ENCODE measurements at regions of chr14 and their contacts with region 1.

Region 1: GRCh38 chr14:64823305-64823861 is 56.3 kb downstream of the SPTB start:
- DNase-seq: peak; percentile 84 to 91 (median 90)
- ATAC-seq: peak; percentile 87 to 89
- H3K4me3 ChIP-seq: no peak overlapping the region
- H3K27ac ChIP-seq: no peak overlapping the region
- H3K4me1 ChIP-seq: peaks cover 10% of the 10 kb centered on the region
- H3K27me3 ChIP-seq: no peaks in the 10 kb centered on the region

Region 2: GRCh38 chr14:64879635-64880220 is 56.3 kb after region 1 on chr14 and contains the start of gene SPTB:
- intact Hi-C with region 1: loop called in 1 of 4 experiments (anchors 5 kb)
- DNase-seq: peak; percentile 59 to 87 (median 86)
- ATAC-seq: peak; percentile 92
- H3K4me3 ChIP-seq: peak within 1 kb of the TSS; percentile 72
- H3K27ac ChIP-seq: peak within 1 kb of the TSS; percentile 71
- H3K4me1 ChIP-seq: no peaks in the 10 kb centered on the region
- H3K27me3 ChIP-seq: peaks cover 2% of the 10 kb centered on the region
- total RNA-seq, gene SPTB: 79.4 to 96.5 (median 83.4) TPM

Region 3: DNA sequence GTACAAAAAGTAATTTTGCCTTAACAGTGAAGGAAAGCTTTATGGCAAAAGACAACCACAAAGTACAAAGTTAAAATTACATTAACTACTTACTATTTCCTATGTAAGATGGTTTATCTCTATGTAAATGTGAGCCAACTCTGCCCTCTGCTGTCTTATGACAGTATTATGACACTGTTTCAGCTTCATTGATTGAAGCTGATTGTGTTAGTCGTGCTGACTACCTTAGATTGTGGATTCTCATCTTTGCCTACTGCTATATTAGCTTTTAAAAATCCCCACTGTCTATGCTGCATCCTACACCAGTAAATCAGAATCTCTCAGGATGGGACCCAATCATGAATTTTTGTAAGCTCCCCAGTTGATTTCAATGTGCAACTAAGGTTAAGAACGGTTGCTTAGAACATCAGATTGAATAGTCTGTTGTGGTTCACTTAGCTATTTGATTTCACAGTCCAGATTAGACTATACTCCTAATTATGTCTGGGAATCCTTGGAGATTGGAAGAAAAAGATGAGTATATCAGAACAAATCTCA is 68.5 kb after region 1 on chr14:
- intact Hi-C with region 1: loop called in 3 of 4 experiments (anchors 5 kb)
- DNase-seq: no peak
- ATAC-seq: peak; percentile 41 to 71
- H3K4me3 ChIP-seq: no peak overlapping the region
- H3K27ac ChIP-seq: no peak overlapping the region
- H3K4me1 ChIP-seq: no peaks in the 10 kb centered on the region
- H3K27me3 ChIP-seq: no peaks in the 10 kb centered on the region

Region 4: DNA sequence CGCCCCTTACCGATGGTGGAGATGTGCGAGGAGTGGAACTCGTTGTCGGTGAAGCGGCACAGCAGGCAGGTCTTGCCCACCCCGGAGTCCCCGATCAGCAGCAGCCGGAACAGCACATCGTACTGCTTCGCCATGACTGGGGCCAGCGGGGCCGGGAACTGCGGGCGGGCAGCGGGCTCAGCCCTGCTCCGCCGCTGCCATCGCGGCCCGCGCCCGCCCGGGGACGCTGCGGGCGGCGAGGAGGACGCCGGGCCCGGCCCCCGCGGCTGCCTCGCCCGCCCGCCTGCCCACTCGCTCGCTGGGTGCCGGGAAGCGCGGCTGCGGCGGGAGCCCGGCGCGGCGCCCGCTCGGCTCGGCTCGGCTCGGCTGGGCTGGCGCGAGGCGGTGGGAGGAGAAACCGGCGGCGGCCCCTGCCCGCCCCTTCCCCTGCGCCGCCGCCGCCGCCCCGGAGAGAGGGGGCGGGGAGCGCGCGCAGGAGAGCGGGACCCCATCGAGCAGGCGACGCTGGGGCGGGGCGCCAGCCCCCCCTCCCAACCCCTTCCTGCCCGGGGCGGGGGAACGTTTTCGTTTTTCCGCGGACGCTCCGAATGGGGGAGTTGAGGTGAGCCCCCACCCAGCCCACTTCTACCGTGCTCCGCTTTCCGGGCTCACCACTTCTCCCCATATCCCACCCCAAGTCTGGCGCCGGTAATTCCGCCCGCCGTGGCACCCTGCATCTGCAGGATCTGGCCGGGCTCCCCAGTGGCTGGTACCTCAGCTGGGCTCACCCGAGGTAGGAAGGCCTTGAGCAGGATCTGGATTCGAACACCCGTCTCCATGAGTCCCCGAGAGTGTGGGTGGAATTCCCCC is 148.8 kb after region 1 on chr14 and contains the start of gene RAB15:
- intact Hi-C with region 1: loop called in 1 of 4 experiments (anchors 10 kb)
- DNase-seq: peak; percentile 39 to 77 (median 71)
- ATAC-seq: peak; percentile 80 to 81
- H3K4me3 ChIP-seq: peak within 1 kb of the TSS; percentile 98
- H3K27ac ChIP-seq: no peak within 1 kb of the TSS
- H3K4me1 ChIP-seq: no peaks in the 10 kb centered on the region
- H3K27me3 ChIP-seq: no peaks in the 10 kb centered on the region
- total RNA-seq, gene RAB15: 12.7 to 48.1 (median 16.9) TPM

Region 5: DNA sequence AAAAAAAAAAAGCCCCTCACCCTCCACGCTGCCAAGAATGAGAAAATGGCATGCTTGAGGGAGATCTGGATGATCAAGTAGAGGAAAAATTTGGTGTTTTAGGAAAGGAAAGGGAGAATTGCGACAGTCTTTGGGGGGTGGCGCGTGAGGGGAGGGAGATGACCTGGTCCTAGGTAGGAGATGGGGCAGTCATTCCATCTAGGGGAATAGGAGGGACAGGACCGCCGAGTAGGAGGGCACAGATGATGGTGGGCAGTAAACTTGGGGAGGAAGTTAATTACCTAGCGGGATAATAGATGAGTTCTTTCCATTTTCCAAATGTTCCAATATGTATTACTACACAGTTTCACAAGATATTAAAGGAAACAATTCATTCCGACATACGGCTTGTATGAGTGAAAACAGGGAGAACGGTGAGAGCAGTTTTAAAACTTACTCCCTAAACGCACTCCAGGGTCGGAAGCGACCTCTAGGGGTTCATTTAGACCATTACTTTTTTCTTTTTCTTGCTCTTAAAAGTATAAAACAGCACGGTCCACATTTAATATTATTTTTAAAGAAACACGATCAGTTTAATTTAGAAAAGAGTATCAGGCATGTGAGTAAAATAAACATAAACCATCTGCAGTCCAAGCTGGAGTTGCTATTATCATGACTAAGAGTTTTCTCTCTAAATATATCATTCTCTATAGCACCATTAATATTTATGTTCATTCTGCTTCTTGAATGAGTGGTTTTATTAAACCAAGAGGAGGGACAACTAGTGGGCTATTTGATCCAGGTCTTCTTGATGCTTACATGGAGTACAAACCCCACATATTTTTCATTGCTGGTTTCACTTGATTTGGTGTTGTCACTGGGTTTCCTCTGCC is 160.3 kb after region 1 on chr14:
- intact Hi-C with region 1: loop called in 2 of 4 experiments (anchors 5 to 10 kb)
- DNase-seq: no peak
- ATAC-seq: no peak
- H3K4me3 ChIP-seq: peak overlapping the region; percentile 33
- H3K27ac ChIP-seq: no peak overlapping the region
- H3K4me1 ChIP-seq: no peaks in the 10 kb centered on the region
- H3K27me3 ChIP-seq: no peaks in the 10 kb centered on the region

Measured in right cardiac atrium (tissue), 5 donors.